Panc1 (cell line): ENCODE measurements at regions of chr13 and their contacts with region 1.

Region 1: DNA sequence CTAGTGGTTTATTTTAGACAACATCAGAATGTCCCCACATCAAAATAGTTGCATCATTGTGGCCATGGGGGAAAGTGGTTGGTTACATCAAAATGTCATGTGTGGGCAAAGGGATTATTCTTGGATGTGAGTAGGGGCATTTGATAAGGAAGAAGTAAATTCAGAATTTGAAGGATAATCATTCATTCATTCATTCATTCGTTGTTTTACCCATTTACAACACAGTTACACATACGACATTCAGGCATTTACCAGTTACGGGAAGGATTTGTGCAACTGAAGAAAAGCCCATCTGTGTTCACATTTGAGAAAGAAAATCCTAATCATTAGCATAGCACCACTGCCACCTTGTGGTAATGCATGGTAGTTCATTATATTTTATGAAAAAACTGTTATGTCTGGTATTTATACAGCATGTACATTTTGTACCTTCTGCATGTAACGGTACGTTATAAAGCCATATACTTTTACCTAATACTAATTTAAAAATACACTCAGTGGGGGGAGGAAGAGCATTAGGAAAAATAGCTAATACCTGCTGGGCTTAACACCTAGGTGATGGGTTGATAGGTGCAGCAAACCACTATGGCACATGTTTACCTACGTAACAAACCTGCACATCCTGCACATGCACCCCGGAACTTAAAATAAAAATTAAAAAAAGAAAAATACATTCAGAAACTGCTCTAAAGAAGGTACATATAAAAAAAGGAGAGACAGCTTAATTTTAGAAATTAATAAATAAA is 62.1 kb downstream of the DGKH start:
- DNase-seq: peak; percentile 38
- ATAC-seq: peak; percentile 43
- H3K4me3 ChIP-seq: no peak overlapping the region
- H3K27ac ChIP-seq: 0 out of 2 replicates have a peak overlapping the region, but pooled peaks have one; percentile 34
- H3K4me1 ChIP-seq: peaks cover 12% of the 10 kb centered on the region; the same call in 1 of the 2 replicates
- H3K27me3 ChIP-seq: no peaks in the 10 kb centered on the region
- CTCF ChIP-seq: peak; percentile 59; the same call in 1 of the 2 replicates

Region 2: DNA sequence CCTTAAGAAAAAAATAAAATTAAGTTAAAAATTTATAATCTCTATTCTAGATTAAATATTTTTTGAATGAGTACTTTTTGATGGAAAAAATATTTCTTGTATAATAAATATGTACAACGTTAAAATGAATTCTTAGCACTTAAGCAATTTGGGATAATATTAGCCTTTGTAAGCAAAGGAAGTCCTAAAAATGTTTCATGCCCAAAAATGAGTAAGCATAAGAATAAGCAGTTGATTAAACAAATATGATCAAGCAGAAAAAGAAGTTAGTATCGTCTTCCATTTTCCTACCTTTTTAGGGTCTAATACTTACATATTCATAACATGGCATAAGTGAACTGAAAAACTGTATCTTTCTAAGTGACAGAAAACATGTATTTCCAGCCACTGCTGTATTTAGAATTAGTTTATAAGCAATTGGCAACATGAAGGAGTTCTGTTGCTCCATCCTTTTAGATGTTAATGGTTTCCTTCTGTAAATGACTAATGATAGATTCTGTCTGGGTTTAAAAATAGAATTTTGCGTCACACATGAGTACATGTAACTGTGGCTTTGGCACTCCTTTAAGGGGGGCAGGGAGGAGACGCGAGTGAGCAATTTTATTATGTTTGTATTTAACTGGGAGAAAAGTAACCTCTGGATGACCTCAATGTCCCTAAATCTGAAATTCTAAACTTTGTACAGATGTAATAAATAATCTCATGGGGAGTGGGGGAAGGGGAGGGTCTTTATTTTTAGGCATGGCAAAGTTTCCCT is 415.9 kb before region 1 on chr13:
- CTCF ChIA-PET with region 1: no interaction called
- POLR2A ChIA-PET with region 1: no interaction called
- in situ Hi-C with region 1: no loop called
- intact Hi-C with region 1: loop called (anchors 10 kb)
- DNase-seq: peak; percentile 25
- ATAC-seq: no peak
- H3K4me3 ChIP-seq: no peak overlapping the region
- H3K27ac ChIP-seq: no peak overlapping the region
- H3K4me1 ChIP-seq: peaks cover 9% of the 10 kb centered on the region; the same call in 1 of the 2 replicates
- H3K27me3 ChIP-seq: no peaks in the 10 kb centered on the region
- CTCF ChIP-seq: no peak

Region 3: DNA sequence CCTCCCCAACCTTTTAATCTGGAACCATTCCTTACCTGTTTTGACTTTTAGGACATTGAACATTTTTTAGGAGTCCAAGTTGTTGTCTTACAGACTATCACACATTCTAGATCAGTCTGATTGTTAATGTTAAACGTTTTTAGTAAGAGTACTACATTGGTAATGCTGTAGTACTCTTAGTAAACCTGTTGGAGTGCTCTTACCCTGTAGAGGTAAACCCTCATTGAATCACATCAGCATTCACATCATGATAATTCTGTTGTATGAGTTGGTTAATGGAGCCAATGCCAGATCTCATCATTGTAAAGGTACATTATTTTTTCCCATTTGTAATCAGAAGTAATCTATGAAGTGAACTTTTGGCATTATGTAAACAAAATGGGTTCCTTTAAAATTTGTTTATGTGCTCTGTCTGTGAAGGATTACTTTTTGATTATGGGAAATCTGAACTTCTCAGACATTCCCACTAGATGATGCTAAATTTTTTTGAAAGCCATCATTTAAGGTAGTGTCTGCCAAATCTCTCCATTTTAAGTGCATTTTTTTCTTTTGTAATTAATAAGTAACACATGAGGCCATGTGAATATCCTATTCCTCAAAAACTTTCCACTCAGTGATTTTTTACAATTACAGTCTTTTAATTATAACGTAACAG is 204.9 kb before region 1 on chr13:
- CTCF ChIA-PET with region 1: no interaction called
- POLR2A ChIA-PET with region 1: no interaction called
- in situ Hi-C with region 1: no loop called
- intact Hi-C with region 1: loop called (anchors 10 kb)
- DNase-seq: peak; percentile 30
- ATAC-seq: peak; percentile 94
- H3K4me3 ChIP-seq: no peak overlapping the region
- H3K27ac ChIP-seq: no peak overlapping the region
- H3K4me1 ChIP-seq: no peaks in the 10 kb centered on the region
- H3K27me3 ChIP-seq: no peaks in the 10 kb centered on the region
- CTCF ChIP-seq: peak; percentile 61; the same call in 1 of the 2 replicates

Region 4: DNA sequence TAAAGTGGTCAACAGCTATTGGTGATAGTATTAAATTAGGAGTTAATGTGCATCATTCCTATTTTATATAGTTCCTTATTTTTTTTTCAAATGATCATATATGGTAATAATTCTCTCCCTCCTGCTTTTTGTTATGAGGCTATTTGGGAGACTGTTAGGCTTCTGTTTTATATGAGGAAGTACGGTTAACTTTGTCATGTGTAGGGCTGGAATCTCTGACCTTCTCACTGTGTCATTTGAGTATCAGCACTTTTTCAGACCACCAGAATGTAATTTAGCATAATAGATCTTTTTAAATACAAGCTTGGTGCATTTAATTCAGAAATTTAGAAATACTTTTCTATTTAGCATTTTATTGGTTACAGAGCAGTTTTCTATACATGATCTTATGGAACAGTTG is 54.4 kb before region 1 on chr13:
- CTCF ChIA-PET with region 1: no interaction called
- POLR2A ChIA-PET with region 1: no interaction called
- in situ Hi-C with region 1: no loop called
- intact Hi-C with region 1: loop called (anchors 10 kb)
- DNase-seq: no peak
- ATAC-seq: no peak
- H3K4me3 ChIP-seq: no peak overlapping the region
- H3K27ac ChIP-seq: no peak overlapping the region
- H3K4me1 ChIP-seq: no peaks in the 10 kb centered on the region; the same call in 1 of the 2 replicates
- H3K27me3 ChIP-seq: no peaks in the 10 kb centered on the region
- CTCF ChIP-seq: no peak